ENCODE measurements at regions of chr6 and their contacts with region 1.

Region 1: DNA sequence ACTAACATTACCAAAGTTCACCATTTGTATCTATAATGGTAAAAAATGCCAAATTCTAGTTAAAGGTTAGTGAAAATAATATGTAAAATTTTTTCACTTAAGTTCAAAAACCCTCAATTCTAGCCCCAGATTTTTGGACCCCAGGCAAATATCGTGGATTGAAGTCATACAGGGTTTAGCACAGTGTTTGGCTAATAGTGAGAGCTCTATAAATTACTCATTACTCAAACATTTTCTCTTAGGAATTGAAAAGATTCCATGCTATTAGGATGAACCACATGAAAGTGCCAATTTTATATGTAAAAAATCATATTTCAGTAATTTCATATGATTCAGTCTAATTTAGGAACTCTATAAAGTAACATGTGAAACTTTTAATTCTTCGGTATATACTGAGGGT is 170.3 kb upstream of the PREP start:
- DNase-seq: no peak
- ATAC-seq: no peak
- H3K4me3 ChIP-seq: no peak overlapping the region
- H3K27ac ChIP-seq: no peak overlapping the region
- H3K4me1 ChIP-seq: no peaks in the 10 kb centered on the region
- H3K27me3 ChIP-seq: no peaks in the 10 kb centered on the region; a peak in 2 of 5 replicates
- CTCF ChIP-seq: no peak
- EP300 ChIP-seq: no peak
- POLR2A ChIP-seq: no peak
- RAD21 ChIP-seq: no peak

Region 2: GRCh38 chr6:105560611-105561066 is 12.5 kb before region 1 on chr6:
- CTCF ChIA-PET with region 1: no interaction called
- POLR2A ChIA-PET with region 1: interaction called, 3 read pairs
- in situ Hi-C with region 1: no loop called
- intact Hi-C with region 1: loop called (anchors 1 kb)
- DNase-seq: no peak
- ATAC-seq: no peak
- H3K4me3 ChIP-seq: no peak overlapping the region
- H3K27ac ChIP-seq: no peak overlapping the region
- H3K4me1 ChIP-seq: no peaks in the 10 kb centered on the region
- H3K27me3 ChIP-seq: peaks cover 11 to 18% of the 10 kb centered on the region in 2 experiments; a peak in 1 of 5 replicates
- CTCF ChIP-seq: no peak
- EP300 ChIP-seq: no peak
- POLR2A ChIP-seq: no peak
- RAD21 ChIP-seq: no peak

Region 3: DNA sequence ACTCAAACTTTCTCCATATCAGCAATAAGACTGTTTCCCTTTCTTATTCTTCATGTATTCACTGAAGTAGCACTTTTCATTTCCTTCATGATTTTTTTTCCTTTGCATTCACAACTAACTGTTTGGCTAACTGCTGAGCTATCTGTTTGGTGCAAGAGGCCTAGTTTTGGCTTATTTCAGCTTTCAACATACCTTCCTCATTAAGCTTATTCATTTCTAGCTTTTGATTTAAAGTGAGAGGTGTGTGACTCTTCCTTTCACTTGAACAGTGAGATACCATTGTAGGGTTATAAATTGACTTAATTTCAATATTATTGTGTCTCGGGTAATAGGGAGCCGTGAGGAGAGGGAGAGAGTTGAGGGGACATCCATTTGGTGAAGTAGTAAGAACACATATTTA is 91.8 kb after region 1 on chr6:
- CTCF ChIA-PET with region 1: no interaction called
- POLR2A ChIA-PET with region 1: no interaction called
- in situ Hi-C with region 1: no loop called
- intact Hi-C with region 1: no loop called
- DNase-seq: no peak
- ATAC-seq: no peak
- H3K4me3 ChIP-seq: no peak overlapping the region
- H3K27ac ChIP-seq: no peak overlapping the region
- H3K4me1 ChIP-seq: no peaks in the 10 kb centered on the region
- H3K27me3 ChIP-seq: peaks cover 13 to 31% of the 10 kb centered on the region in 2 experiments; a peak in 3 of 5 replicates
- CTCF ChIP-seq: no peak
- EP300 ChIP-seq: no peak
- POLR2A ChIP-seq: no peak
- RAD21 ChIP-seq: no peak

Region 4: DNA sequence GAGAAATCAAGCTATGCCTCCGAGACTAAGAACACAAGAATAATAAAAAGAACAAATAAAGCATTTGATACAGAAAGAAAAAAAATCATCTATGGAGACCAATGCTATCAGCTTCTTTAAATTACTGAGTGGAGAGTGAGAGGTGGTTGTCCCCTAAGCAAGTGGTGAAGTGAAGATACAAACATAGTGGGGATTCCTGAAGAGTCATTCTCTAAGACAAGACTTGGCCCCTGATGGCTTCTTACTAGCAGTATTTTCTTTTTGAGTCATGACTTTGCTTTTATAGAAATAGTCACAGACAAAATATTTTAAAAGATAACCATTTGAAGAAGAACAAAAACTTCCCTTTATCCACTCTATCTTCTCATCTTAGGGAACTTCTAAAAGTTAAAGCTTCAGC is 251.6 kb after region 1 on chr6:
- CTCF ChIA-PET with region 1: no interaction called
- POLR2A ChIA-PET with region 1: no interaction called
- in situ Hi-C with region 1: no loop called
- intact Hi-C with region 1: no loop called
- DNase-seq: no peak
- ATAC-seq: no peak
- H3K4me3 ChIP-seq: no peak overlapping the region
- H3K27ac ChIP-seq: no peak overlapping the region
- H3K4me1 ChIP-seq: no peaks in the 10 kb centered on the region
- H3K27me3 ChIP-seq: no peaks in the 10 kb centered on the region
- CTCF ChIP-seq: no peak
- EP300 ChIP-seq: no peak
- POLR2A ChIP-seq: no peak
- RAD21 ChIP-seq: no peak

Measured in K562 (cell line).